A673 (cell line): ENCODE measurements at regions of chr15 and their contacts with region 1.

Region 1: DNA sequence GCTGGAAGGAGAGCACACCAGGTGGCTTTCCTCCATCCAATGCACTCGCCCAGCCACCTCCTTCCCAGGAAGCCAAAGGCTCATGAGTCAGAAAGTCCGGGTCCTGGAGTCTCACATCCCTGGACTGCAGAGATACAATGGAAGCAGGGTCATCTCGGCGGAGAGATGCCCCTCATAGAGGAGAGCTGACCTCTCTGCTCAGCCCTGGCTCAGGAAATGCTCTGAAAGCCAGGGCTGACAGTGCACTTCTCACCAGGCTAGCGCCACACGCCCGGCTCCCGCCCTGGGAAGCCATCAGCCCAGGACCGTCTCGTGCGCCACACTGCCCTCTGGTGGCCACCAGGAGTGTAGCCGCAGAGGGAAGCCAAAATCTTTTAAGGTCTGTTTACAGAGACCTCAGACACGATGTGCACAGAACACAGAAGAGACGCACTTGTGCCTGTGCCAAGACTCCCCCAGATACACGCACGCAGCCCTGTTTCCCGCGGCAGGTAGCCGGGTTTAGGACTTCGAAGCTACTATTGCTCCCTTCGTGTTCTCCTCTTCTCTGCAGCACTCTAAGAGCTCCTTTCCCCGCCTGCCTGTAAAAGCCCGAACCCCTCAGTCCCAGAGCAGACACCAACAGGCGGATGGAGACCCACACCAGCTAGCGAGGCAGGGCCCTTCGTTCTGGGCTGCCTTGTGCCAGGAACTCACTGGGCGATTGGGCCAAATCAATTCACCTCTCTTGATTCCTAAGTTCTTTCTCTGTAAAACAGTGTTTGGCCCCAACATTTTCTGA is 9.7 kb downstream of the NTRK3 start:
- DNase-seq: peak; percentile 78
- H3K4me3 ChIP-seq: no peak overlapping the region
- H3K27ac ChIP-seq: no peak overlapping the region
- H3K4me1 ChIP-seq: no peaks in the 10 kb centered on the region
- H3K27me3 ChIP-seq: peaks cover 6% of the 10 kb centered on the region
- CTCF ChIP-seq: peak; percentile 92

Region 2: DNA sequence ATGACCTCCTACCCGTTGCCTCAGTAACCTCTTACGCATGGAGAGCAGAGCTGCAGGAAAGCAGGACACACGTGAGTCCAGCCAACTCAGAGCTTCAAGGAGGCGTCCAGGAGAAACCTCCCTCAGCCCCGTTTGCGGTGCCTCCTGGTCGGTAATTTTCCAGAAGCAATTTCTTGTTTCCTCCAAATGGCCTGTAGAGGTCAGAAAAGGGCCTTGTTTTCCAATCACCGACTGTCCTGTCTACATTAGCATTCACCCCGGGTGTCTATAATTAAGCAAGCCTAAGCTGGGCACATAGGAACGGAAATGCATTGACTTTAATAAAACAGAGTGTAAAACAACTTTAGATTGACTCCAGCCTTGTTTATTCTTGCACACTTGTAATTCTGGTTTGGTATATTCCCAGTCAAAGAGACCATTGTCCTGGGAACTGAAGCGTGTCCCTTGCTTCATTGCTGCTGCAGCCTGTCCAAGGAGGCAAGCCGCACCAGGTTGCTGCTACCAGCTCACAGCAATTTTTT is 1331.0 kb before region 1 on chr15:
- CTCF ChIA-PET with region 1: no interaction called
- POLR2A ChIA-PET with region 1: no interaction called
- intact Hi-C with region 1: loop called (anchors 10 kb)
- DNase-seq: peak; percentile 37
- H3K4me3 ChIP-seq: no peak overlapping the region
- H3K27ac ChIP-seq: no peak overlapping the region
- H3K4me1 ChIP-seq: no peaks in the 10 kb centered on the region
- H3K27me3 ChIP-seq: no peaks in the 10 kb centered on the region
- CTCF ChIP-seq: 0 out of 2 replicates have a peak, but pooled peaks have one; percentile 21

Region 3: GRCh38 chr15:88450109-88450798 is 203.4 kb after region 1 on chr15:
- CTCF ChIA-PET with region 1: interaction called, 6 read pairs
- POLR2A ChIA-PET with region 1: no interaction called
- intact Hi-C with region 1: loop called (anchors 2 kb)
- DNase-seq: peak; percentile 75
- H3K4me3 ChIP-seq: no peak overlapping the region
- H3K27ac ChIP-seq: no peak overlapping the region
- H3K4me1 ChIP-seq: no peaks in the 10 kb centered on the region
- H3K27me3 ChIP-seq: peaks cover 11% of the 10 kb centered on the region
- CTCF ChIP-seq: peak; percentile 94

Region 4: GRCh38 chr15:89475661-89476060 is 1228.8 kb after region 1 on chr15:
- CTCF ChIA-PET with region 1: no interaction called
- POLR2A ChIA-PET with region 1: no interaction called
- intact Hi-C with region 1: no loop called
- DNase-seq: peak; percentile 42
- H3K4me3 ChIP-seq: no peak overlapping the region
- H3K27ac ChIP-seq: peak overlapping the region; percentile 73
- H3K4me1 ChIP-seq: peaks cover 9% of the 10 kb centered on the region
- H3K27me3 ChIP-seq: no peaks in the 10 kb centered on the region
- CTCF ChIP-seq: no peak